Dendritic cell treated with granulocyte-macrophage colony-stimulating factor and Interleukin-4, amounts not matched to agents 40 ng/mL and 50 ng/mL, for 4 days (primary cell): ENCODE measurements at regions of chr10 and their contacts with region 1.

Region 1: GRCh38 chr10:14837757-14838581 is at the starts of genes CDNF, HSPA14 and MSANTD7:
- H3K4me3 Mint-ChIP-seq: peak within 1 kb of the TSS; percentile 96
- H3K27ac Mint-ChIP-seq: peak within 1 kb of the TSS; percentile 95
- H3K4me1 Mint-ChIP-seq: peaks cover 8% of the 10 kb centered on the region
- H3K27me3 Mint-ChIP-seq: no peaks in the 10 kb centered on the region

Region 2: DNA sequence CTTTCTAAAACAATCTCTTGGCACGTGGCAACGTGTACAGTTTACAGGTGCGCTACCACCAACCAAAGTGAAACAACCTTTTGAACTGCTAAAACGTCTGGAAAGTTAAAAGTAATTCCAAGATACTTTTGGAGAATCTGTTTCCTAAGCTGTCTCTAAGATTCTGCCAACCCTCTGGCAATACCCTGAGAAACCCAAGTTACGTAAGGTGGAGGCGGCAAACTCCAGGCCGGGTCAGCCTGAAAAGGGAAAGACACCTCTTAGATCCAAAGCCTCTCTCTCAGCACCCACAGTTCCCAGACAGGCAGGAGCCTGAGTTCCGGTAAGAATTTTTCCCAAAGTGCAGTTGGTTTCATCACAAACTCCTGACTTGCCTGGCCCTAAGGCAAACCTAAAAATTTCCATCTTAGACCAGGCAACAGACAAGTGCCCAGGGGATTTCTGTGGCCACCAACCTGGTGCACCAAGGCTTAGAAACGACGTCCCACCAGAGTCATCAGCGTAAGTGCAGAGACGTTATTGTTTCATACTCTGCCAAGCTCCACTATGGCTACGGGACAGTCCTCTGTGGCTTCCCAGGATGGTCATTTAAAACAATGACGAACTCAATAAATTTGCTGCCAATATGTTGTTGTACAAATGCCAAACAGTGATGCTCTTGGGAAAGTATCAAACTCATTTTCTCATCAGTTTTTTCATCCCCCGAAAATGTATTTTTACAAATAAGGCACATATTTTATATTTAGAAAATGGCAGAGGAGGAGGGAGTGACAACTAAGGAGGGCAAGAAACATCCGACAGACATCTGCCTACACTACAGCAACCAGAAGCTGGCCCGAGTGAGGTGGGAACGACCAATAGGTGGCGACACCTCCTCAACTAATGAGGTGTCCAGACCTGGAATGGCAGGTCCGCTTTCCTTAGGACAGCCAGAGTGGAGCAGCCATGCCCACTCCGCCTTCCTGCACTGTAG is 301.4 kb before region 1 on chr10:
- intact Hi-C with region 1: loop called (anchors 5 kb)
- H3K4me3 Mint-ChIP-seq: no peak overlapping the region
- H3K27ac Mint-ChIP-seq: no peak overlapping the region
- H3K4me1 Mint-ChIP-seq: peaks cover 17% of the 10 kb centered on the region
- H3K27me3 Mint-ChIP-seq: no peaks in the 10 kb centered on the region

Region 3: GRCh38 chr10:14604181-14605142 is 233.5 kb before region 1 on chr10:
- intact Hi-C with region 1: loop called (anchors 2 kb)
- H3K4me3 Mint-ChIP-seq: peak overlapping the region; percentile 90
- H3K27ac Mint-ChIP-seq: peak overlapping the region; percentile 94
- H3K4me1 Mint-ChIP-seq: peaks cover 58% of the 10 kb centered on the region
- H3K27me3 Mint-ChIP-seq: peaks cover 5% of the 10 kb centered on the region

Region 4: GRCh38 chr10:14878266-14879054 is 40.5 kb after region 1 on chr10 and contains the start of gene SUV39H2:
- intact Hi-C with region 1: loop called (anchors 1 kb)
- H3K4me3 Mint-ChIP-seq: peak within 1 kb of the TSS; percentile 97
- H3K27ac Mint-ChIP-seq: peak within 1 kb of the TSS; percentile 94
- H3K4me1 Mint-ChIP-seq: peaks cover 41% of the 10 kb centered on the region
- H3K27me3 Mint-ChIP-seq: no peaks in the 10 kb centered on the region

Region 5: GRCh38 chr10:15168781-15169554 is 331.0 kb after region 1 on chr10:
- intact Hi-C with region 1: loop called (anchors 2 kb)
- H3K4me3 Mint-ChIP-seq: peak overlapping the region; percentile 1
- H3K27ac Mint-ChIP-seq: peak overlapping the region; percentile 82
- H3K4me1 Mint-ChIP-seq: peaks cover 19% of the 10 kb centered on the region
- H3K27me3 Mint-ChIP-seq: peaks cover 48% of the 10 kb centered on the region